MCF 10A (cell line): ENCODE measurements at regions of chr10 and their contacts with region 1.

Region 1: DNA sequence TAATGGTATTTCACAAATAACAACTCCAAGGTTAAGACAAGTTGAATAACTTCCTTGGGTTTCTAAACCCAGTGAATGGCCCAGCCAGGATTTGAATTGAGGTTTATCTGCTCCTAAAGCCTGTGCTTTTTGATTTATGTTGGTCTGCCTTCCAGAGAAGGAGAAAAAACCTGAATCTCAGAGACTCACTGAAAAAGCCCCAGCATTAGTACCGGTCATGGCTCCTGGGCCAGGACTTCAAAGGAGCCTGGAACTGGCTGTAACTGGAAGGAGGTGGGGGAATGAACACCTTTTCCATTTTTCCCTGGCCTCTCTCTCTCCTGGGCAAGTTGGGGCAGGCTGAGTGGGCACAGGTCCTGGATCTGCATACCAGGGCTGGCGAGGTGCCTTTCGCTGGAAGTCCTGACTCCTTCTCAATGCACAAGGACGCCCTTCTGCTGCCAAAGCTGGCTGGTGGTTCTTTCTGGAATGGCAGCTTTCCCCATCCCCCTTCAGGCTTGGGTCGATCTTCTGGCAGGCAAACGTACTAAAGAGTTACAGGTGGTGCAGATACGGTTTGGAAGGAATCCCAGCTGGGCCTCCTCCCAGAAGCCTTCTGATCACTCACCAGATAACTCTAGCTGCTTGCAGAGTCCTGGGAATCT is 268.2 kb downstream of the PTEN start:
- DNase-seq: peak; percentile 98
- H3K4me3 Mint-ChIP-seq: peak overlapping the region; percentile 66
- H3K27ac Mint-ChIP-seq: peak overlapping the region; percentile 50
- H3K4me1 Mint-ChIP-seq: peaks cover 27% of the 10 kb centered on the region
- H3K27me3 Mint-ChIP-seq: no peaks in the 10 kb centered on the region
- CTCF ChIP-seq: peak; percentile 19

Region 2: GRCh38 chr10:88091490-88092105 is 40.0 kb before region 1 on chr10:
- CTCF ChIA-PET with region 1: interaction called, 5 read pairs
- POLR2A ChIA-PET with region 1: interaction called, 11 read pairs
- intact Hi-C with region 1: no loop called
- DNase-seq: peak; percentile 80
- H3K4me3 Mint-ChIP-seq: no peak overlapping the region
- H3K27ac Mint-ChIP-seq: peak overlapping the region; percentile 63
- H3K4me1 Mint-ChIP-seq: peaks cover 66% of the 10 kb centered on the region
- H3K27me3 Mint-ChIP-seq: no peaks in the 10 kb centered on the region
- CTCF ChIP-seq: no peak

Region 3: GRCh38 chr10:88152720-88153119 is 21.1 kb after region 1 on chr10:
- CTCF ChIA-PET with region 1: interaction called, 3 read pairs
- POLR2A ChIA-PET with region 1: interaction called, 12 read pairs
- intact Hi-C with region 1: no loop called
- DNase-seq: peak; percentile 95
- H3K4me3 Mint-ChIP-seq: no peak overlapping the region
- H3K27ac Mint-ChIP-seq: peak overlapping the region; percentile 91
- H3K4me1 Mint-ChIP-seq: peaks cover 35% of the 10 kb centered on the region
- H3K27me3 Mint-ChIP-seq: no peaks in the 10 kb centered on the region
- CTCF ChIP-seq: no peak

Region 4: DNA sequence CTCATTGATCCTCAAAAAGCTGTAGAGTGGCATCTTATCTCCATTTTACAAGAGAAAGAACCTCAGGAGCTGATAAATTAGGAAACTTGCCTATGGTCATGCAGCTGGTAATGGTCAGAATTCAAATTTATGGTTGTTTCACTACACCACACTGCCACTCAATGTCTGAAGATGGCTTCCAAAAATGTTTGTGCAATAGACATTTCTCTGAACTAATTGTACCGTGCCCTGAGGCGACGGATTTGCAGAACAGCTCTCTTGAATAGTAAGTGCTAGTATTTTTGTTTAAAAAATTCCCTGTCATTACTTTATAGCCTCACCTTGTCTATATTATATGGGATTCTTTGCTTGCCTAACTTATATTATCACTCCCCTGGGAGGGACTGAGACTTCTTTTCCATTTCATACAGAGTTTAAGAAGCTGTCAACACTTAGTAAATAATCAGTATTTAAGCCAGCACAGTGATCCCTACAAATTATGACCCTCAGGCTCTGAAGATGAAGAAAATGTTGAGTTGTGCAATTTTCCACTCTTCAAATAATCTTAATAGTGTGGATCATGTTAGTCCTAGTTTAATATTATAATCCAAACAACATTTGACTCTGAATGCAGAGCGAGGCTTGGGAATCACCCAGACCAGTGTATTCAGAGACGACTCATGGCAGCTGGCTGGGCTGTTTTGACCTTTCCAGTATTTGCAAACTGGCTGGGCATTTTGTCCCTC is 78.4 kb after region 1 on chr10:
- CTCF ChIA-PET with region 1: interaction called, 4 read pairs
- POLR2A ChIA-PET with region 1: interaction called, 12 read pairs
- intact Hi-C with region 1: no loop called
- DNase-seq: peak; percentile 72
- H3K4me3 Mint-ChIP-seq: peak overlapping the region; percentile 12
- H3K27ac Mint-ChIP-seq: peak overlapping the region; percentile 43
- H3K4me1 Mint-ChIP-seq: peaks cover 29% of the 10 kb centered on the region
- H3K27me3 Mint-ChIP-seq: no peaks in the 10 kb centered on the region
- CTCF ChIP-seq: no peak

Region 5: DNA sequence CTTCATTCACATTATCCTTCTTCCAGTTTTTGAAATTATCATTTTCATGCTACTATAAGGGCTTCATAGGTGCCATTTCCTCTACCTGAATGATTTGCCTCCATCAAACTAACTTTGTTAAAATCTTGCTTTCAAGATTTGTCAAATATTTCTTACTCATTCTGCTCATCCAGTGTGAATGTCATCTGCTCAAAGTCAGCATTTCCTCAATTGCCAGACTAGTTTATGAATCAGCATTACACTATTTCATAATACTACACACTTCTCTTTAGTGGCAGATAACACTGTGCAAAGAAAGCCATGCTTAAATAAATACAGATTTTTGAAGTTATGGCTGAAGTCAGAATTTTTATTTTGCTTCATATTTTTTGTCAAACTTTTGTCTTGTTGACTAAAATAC is 511.3 kb after region 1 on chr10:
- CTCF ChIA-PET with region 1: no interaction called
- POLR2A ChIA-PET with region 1: no interaction called
- intact Hi-C with region 1: no loop called
- DNase-seq: peak; percentile 42
- H3K4me3 Mint-ChIP-seq: no peak overlapping the region
- H3K27ac Mint-ChIP-seq: no peak overlapping the region
- H3K4me1 Mint-ChIP-seq: no peaks in the 10 kb centered on the region
- H3K27me3 Mint-ChIP-seq: no peaks in the 10 kb centered on the region
- CTCF ChIP-seq: no peak